Activated CD4-positive, alpha-beta memory T cell treated with anti-CD3 and anti-CD28 coated beads for 36 hours (primary cell): ENCODE measurements at regions of chr5 and their contacts with region 1.

Region 1: DNA sequence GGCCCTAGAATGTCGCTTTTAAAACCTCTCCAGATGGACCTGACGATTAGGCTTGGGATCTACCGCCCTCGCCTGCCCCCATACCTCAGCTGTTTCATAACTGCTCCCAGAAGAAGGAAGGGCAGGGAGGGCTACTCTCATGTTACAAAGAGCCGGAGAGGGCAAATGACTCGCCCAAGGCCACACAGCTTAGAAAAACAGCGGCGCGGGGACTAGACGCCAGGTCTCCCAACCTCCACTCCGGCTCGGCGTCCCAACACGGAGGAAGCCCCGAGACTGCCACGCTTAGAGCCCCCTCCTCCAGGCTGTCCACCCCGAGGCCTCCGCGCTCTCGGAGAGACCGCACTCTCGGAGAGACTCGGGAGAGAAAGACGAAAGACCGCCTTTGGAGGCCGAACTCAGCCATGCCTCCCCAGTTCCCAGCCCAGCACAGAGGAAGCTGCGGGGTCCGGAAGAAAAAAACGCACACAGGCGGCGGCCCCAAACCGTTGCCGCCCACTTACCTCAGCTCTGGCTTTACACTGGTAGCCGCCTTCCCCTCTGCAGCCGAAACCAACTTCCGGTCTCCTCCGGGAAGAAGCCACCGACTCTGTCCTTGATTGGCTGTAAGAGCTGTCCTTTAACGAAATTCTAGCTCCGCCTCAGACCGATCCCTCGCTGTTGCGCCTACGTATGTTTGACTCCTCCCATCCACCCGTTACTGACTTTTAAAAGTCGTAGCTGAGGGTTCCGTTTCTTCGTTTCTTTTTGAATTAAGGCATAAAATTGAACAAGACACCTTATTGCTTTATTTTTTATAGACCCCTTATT is at the start of gene MED7:
- DNase-seq: peak; percentile 96
- H3K4me3 Mint-ChIP-seq: peak within 1 kb of the TSS; percentile 96
- H3K27ac Mint-ChIP-seq: peak within 1 kb of the TSS; percentile 99
- H3K4me1 Mint-ChIP-seq: peaks cover 49% of the 10 kb centered on the region
- H3K27me3 Mint-ChIP-seq: no peaks in the 10 kb centered on the region
- total RNA-seq, gene MED7: 17.2 to 19.2 TPM

Region 2: DNA sequence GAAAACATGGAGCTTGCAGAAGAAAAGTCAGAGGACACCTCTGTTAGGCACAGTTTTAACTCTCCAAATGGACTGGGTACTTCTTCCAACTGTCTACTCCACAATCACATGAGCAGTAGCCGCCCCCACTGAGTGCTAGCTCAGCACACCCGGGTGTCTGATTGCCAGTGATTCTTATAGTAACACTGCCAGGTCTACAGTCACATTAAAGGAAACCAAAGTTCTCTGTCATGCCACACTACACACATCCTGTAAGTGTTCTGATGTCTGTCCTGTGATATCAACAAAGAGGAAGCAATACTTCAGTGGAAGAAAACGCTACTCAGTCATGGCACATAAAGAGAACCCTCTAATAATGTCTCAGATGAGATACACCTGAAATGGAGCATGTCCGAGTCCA is 33.5 kb before region 1 on chr5 and contains the start of gene HAVCR2:
- CTCF ChIA-PET with region 1: no interaction called
- POLR2A ChIA-PET with region 1: no interaction called
- intact Hi-C with region 1: loop called (anchors 1 kb)
- DNase-seq: peak; percentile 84
- H3K4me3 Mint-ChIP-seq: peak within 1 kb of the TSS; percentile 79
- H3K27ac Mint-ChIP-seq: peak within 1 kb of the TSS; percentile 95
- H3K4me1 Mint-ChIP-seq: peaks cover 40% of the 10 kb centered on the region
- H3K27me3 Mint-ChIP-seq: no peaks in the 10 kb centered on the region
- total RNA-seq, gene HAVCR2: 23.2 to 24.3 TPM